Right ventricle myocardium inferior (tissue), 1 donor: ENCODE measurements at regions of chrX and their contacts with region 1.

Region 1: GRCh38 chrX:15973299-15973698 is 118.7 kb upstream of the AP1S2 start:
- DNase-seq: no peak
- ATAC-seq: peak; percentile 57

Region 2: GRCh38 chrX:15616531-15616930 is 356.8 kb before region 1 on chrX:
- intact Hi-C with region 1: no loop called
- DNase-seq: no peak
- ATAC-seq: peak; percentile 96

Region 3: GRCh38 chrX:15761564-15762191 is 211.6 kb before region 1 on chrX:
- intact Hi-C with region 1: loop called (anchors 1 kb)
- DNase-seq: no peak
- ATAC-seq: no peak

Region 4: DNA sequence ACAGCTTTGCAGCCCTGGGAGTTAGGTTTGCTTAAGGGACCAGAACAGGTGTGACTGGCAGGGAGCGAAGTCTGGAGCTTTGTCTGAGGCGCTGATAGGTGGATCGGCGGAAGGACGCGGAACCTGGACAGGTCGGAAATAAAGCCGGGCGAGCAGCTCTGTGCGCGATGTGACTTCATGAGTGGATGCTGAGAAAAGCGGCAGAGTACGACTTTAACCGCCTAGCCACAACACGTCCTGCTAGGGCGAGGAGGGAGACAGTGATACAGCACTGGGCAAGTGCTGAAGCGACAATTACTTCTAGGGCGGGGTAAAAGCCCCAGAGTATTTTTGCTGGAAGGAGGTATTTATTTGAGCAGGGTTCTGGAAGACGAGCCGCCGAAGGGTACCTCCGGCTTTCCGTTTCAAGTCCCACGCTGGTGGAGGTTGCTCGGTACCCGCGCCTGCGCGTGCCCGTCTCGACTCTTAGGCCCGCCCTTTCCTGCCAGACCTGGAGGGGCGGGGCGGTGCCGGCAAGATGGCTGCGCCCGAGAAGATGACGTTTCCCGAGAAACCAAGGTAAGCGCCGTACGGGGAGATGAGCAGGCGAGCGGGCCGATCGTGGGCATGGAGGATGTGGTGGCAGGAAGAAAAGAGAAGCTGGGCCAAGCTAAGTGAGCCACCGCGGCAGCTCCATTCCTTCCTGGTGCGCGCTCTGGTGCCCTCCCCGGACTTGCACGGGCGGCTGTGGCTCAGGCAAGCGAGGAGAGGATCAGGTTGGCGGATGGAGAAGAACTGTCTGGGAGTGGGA is 183.1 kb before region 1 on chrX and contains the start of gene ZRSR2:
- intact Hi-C with region 1: no loop called
- DNase-seq: peak; percentile 90
- ATAC-seq: peak; percentile 98
- total RNA-seq, gene ZRSR2: 6.8 TPM

Region 5: GRCh38 chrX:15854712-15855567 is 118.4 kb before region 1 on chrX and contains the start of gene AP1S2:
- intact Hi-C with region 1: loop called (anchors 10 kb)
- DNase-seq: peak; percentile 94
- ATAC-seq: peak; percentile 99
- total RNA-seq, gene AP1S2: 154 TPM

Region 6: DNA sequence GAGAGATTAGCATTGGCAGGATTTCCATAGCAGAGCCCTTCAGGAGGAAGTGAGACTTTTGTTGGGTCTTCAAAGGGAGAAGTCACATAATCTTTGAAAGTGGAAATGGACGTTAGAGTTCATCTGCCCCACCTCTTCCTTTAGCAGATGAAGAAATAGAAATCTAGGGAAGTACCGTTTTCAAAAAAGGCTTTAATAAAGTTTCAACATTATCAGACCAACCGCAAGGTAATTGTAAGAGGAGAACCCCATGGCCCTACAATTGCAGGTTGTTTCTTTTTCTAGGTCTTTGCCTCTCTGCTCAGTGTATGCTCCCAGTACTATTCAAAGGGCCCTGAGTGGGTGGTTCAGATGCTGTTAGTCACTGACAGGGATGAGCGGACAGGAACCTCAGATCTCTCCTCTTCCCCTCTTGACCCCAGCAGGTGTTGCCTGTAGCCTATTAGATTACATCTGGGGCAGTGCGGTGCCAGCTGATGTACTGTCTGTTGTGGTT is 70.1 kb before region 1 on chrX:
- intact Hi-C with region 1: no loop called
- DNase-seq: no peak
- ATAC-seq: no peak

Region 7: GRCh38 chrX:16855363-16856075 is 882.2 kb after region 1 on chrX:
- intact Hi-C with region 1: no loop called
- DNase-seq: no peak
- ATAC-seq: no peak